ENCODE measurements at regions of chr9 and their contacts with region 1.

Region 1: GRCh38 chr9:107251756-107252322 is 31.2 kb upstream of the RAD23B start:
- DNase-seq: no peak
- H3K4me3 ChIP-seq: no peak overlapping the region
- H3K27ac ChIP-seq: peak overlapping the region; percentile 46 to 50
- H3K4me1 ChIP-seq: no peaks in the 10 kb centered on the region
- H3K27me3 ChIP-seq: no peaks in the 10 kb centered on the region
- CTCF ChIP-seq: no peak
- POLR2A ChIP-seq: no peak

Region 2: GRCh38 chr9:106233085-106233484 is 1018.8 kb before region 1 on chr9:
- intact Hi-C with region 1: no loop called
- DNase-seq: no peak
- H3K4me3 ChIP-seq: no peak overlapping the region
- H3K27ac ChIP-seq: no peak overlapping the region
- H3K4me1 ChIP-seq: no peaks in the 10 kb centered on the region
- H3K27me3 ChIP-seq: no peaks in the 10 kb centered on the region
- CTCF ChIP-seq: no peak
- POLR2A ChIP-seq: no peak

Region 3: GRCh38 chr9:107208121-107208520 is 43.7 kb before region 1 on chr9:
- intact Hi-C with region 1: no loop called
- DNase-seq: no peak
- H3K4me3 ChIP-seq: no peak overlapping the region
- H3K27ac ChIP-seq: no peak overlapping the region
- H3K4me1 ChIP-seq: no peaks in the 10 kb centered on the region
- H3K27me3 ChIP-seq: no peaks in the 10 kb centered on the region
- CTCF ChIP-seq: no peak
- POLR2A ChIP-seq: no peak

Region 4: GRCh38 chr9:107336718-107337360 is 85.0 kb after region 1 on chr9:
- intact Hi-C with region 1: loop called (anchors 10 kb)
- DNase-seq: peak; percentile 85 to 90
- H3K4me3 ChIP-seq: no peak overlapping the region
- H3K27ac ChIP-seq: peak overlapping the region; percentile 64 to 68
- H3K4me1 ChIP-seq: peaks cover 0 to 5% of the 10 kb centered on the region in 2 donors
- H3K27me3 ChIP-seq: no peaks in the 10 kb centered on the region
- CTCF ChIP-seq: peak in 1 of 3 donors; percentile 45
- POLR2A ChIP-seq: no peak

Measured in breast epithelium (tissue), 4 donors.